ENCODE measurements at regions of chr4 and their contacts with region 1.

Region 1: DNA sequence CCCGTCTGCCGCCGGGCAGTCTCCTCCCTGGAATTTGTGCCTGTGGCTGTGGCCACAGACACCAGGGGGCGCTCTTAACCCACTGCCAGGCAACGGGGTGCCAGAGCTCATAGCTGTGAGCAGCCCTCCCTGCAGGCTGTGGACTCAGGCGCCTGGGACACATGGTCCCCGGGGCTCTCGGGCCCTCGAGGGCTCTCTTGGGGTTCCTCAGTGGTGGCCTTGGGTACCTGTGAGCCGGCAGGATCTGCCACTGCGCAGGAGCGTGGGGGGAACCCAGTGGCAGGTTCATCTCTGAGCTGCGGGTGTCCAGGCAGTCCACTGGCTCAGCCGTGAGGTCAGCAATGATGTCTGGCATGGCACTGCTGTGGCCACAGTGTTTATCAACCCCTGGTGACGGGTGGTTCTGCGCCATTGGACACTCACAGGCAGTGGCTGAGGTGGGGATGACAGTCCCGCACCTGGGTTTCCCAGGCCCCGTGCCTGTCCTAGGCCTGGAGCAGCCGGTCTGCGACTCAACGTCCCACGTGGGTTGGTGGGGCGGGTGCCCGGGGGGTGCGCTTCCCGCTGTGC is 37.2 kb downstream of the PCGF3 start:
- DNase-seq: peak; percentile 44 to 84 (median 68)
- ATAC-seq: peak; percentile 79 to 89 (median 87)
- H3K4me3 ChIP-seq: no peak overlapping the region
- H3K4me3 Mint-ChIP-seq: no peak overlapping the region
- H3K27ac ChIP-seq: no peak overlapping the region
- H3K27ac Mint-ChIP-seq: no peak overlapping the region
- H3K4me1 ChIP-seq: peaks cover 0 to 4% of the 10 kb centered on the region in 2 experiments
- H3K4me1 Mint-ChIP-seq: peaks cover 0 to 6% (median 1%) of the 10 kb centered on the region in 3 donors
- H3K27me3 ChIP-seq: no peaks in the 10 kb centered on the region
- H3K27me3 Mint-ChIP-seq: no peaks in the 10 kb centered on the region

Region 2: GRCh38 chr4:986879-987623 is 244.2 kb after region 1 on chr4 and contains the start of gene IDUA:
- CTCF ChIA-PET with region 1: interaction called in 1 of 2 experiments, 18 read pairs
- POLR2A ChIA-PET with region 1: no interaction called
- DNase-seq: peak; percentile 69 to 90 (median 82)
- ATAC-seq: peak; percentile 90 to 93 (median 92)
- H3K4me3 ChIP-seq: peak within 1 kb of the TSS; percentile 65 to 74
- H3K4me3 Mint-ChIP-seq: peak within 1 kb of the TSS; percentile 84 to 90 (median 86)
- H3K27ac ChIP-seq: peak within 1 kb of the TSS; percentile 8
- H3K27ac Mint-ChIP-seq: peak within 1 kb of the TSS; percentile 89 to 92
- H3K4me1 ChIP-seq: peaks cover 14 to 35% of the 10 kb centered on the region in 2 experiments
- H3K4me1 Mint-ChIP-seq: peaks cover 15 to 32% (median 28%) of the 10 kb centered on the region in 3 donors
- H3K27me3 ChIP-seq: no peaks in the 10 kb centered on the region
- H3K27me3 Mint-ChIP-seq: no peaks in the 10 kb centered on the region
- total RNA-seq, gene IDUA: 60.4 to 96.5 (median 78.7) TPM